ENCODE measurements at regions of chr1 and their contacts with region 1.

Region 1: GRCh38 chr1:51519048-51519864 is at the start of gene EPS15:
- DNase-seq: peak; percentile 85 to 86
- ATAC-seq: peak; percentile 57 to 59
- H3K4me3 ChIP-seq: peak within 1 kb of the TSS; percentile 75 to 82 (median 80)
- H3K27ac ChIP-seq: peak within 1 kb of the TSS; percentile 95 to 97 (median 97)
- H3K4me1 ChIP-seq: peaks cover 32 to 34% of the 10 kb centered on the region in 2 donors
- H3K27me3 ChIP-seq: no peaks in the 10 kb centered on the region
- CTCF ChIP-seq: peak in 1 of 5 experiments; percentile 6
- POLR2A ChIP-seq: peak; percentile 61 to 76
- total RNA-seq, gene EPS15: 44.8 to 121 (median 71.0) TPM

Region 2: GRCh38 chr1:50959913-50960844 is 559.1 kb before region 1 on chr1 and contains the start of gene FAF1:
- in situ Hi-C with region 1: no loop called
- intact Hi-C with region 1: loop called (anchors 10 kb)
- DNase-seq: peak; percentile 94 to 98
- ATAC-seq: peak; percentile 92 to 94
- H3K4me3 ChIP-seq: peak within 1 kb of the TSS; percentile 62 to 89 (median 78)
- H3K27ac ChIP-seq: peak within 1 kb of the TSS; percentile 90 to 97 (median 94)
- H3K4me1 ChIP-seq: peaks cover 7 to 31% of the 10 kb centered on the region in 2 donors
- H3K27me3 ChIP-seq: no peaks in the 10 kb centered on the region
- CTCF ChIP-seq: peak; percentile 3 to 64 (median 50)
- POLR2A ChIP-seq: peak; percentile 92 to 96
- total RNA-seq, gene FAF1: 72.0 to 107 (median 92.0) TPM

Region 3: GRCh38 chr1:51421964-51422363 is 97.3 kb before region 1 on chr1:
- in situ Hi-C with region 1: loop called in 1 of 4 experiments (anchors 25 kb)
- intact Hi-C with region 1: no loop called
- DNase-seq: no peak
- ATAC-seq: peak in 1 of 2 donors; percentile 52
- H3K4me3 ChIP-seq: no peak overlapping the region
- H3K27ac ChIP-seq: no peak overlapping the region
- H3K4me1 ChIP-seq: peaks cover 16 to 35% of the 10 kb centered on the region in 2 donors
- H3K27me3 ChIP-seq: no peaks in the 10 kb centered on the region
- CTCF ChIP-seq: no peak
- POLR2A ChIP-seq: no peak

Region 4: GRCh38 chr1:51616901-51617708 is 97.8 kb after region 1 on chr1 and contains the start of gene OSBPL9:
- in situ Hi-C with region 1: no loop called
- intact Hi-C with region 1: loop called (anchors 2 kb)
- DNase-seq: peak; percentile 86 to 89
- ATAC-seq: peak; percentile 60 to 75
- H3K4me3 ChIP-seq: peak within 1 kb of the TSS; percentile 79 to 99 (median 94)
- H3K27ac ChIP-seq: peak within 1 kb of the TSS; percentile 94 to 99 (median 99)
- H3K4me1 ChIP-seq: peaks cover 47 to 58% of the 10 kb centered on the region in 2 donors
- H3K27me3 ChIP-seq: no peaks in the 10 kb centered on the region
- CTCF ChIP-seq: no peak
- POLR2A ChIP-seq: peak; percentile 88 to 95
- total RNA-seq, gene OSBPL9: 65.8 to 206 (median 136) TPM

Region 5: DNA sequence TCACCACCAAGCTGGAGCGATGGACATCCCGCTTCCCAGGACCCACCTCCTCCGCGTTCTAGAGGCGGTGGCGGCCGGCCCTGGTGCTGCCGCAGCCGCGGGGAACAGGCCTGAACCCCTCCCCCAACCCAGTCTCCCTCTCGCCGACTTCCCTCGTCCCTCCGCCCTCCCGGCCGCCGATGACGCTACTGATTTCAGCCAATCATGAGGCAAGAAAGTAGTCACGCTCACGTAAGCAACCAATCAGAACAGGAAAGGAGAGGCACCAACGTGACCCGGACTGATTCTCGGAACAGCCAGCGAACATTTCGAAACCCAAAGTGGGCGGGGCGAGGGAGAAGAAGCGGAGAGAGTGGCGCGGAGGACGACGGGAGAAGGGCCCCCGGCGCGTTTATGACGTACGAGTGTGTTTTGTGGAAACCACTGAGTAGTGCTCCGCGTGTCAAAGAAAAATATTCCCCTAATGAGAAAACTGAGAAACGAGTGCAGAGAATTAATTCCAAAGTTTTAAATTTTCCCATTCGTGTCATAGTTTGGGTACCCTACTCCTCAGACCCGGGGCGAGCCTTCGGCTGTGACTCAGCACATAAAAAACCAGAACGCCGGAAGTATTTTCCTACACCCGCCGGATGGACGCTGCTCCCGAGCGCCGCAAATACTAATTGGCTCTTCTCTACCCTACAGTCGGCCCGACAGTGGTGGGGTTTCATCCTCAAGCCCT is 359.5 kb after region 1 on chr1 and contains the start of gene NRDC:
- in situ Hi-C with region 1: no loop called
- intact Hi-C with region 1: loop called (anchors 1 kb)
- DNase-seq: peak; percentile 100
- ATAC-seq: peak; percentile 97 to 98
- H3K4me3 ChIP-seq: peak within 1 kb of the TSS; percentile 64 to 99 (median 90)
- H3K27ac ChIP-seq: peak within 1 kb of the TSS; percentile 93 to 99 (median 96)
- H3K4me1 ChIP-seq: peaks cover 35 to 41% of the 10 kb centered on the region in 2 donors
- H3K27me3 ChIP-seq: peaks cover 0 to 20% (median 10%) of the 10 kb centered on the region in 3 donors
- CTCF ChIP-seq: peak in 1 of 5 experiments; percentile 37
- POLR2A ChIP-seq: peak; percentile 97 to 98
- total RNA-seq, gene NRDC: 180 to 270 (median 239) TPM